ENCODE measurements at regions of chr1 and their contacts with region 1.

Region 1: GRCh38 chr1:234326497-234327366 is 46.5 kb upstream of the COA6 start:
- DNase-seq: peak; percentile 91
- H3K4me3 Mint-ChIP-seq: peak overlapping the region; percentile 84
- H3K27ac Mint-ChIP-seq: peak overlapping the region; percentile 74
- H3K4me1 Mint-ChIP-seq: peaks cover 22% of the 10 kb centered on the region
- H3K27me3 Mint-ChIP-seq: peaks cover 22% of the 10 kb centered on the region

Region 2: DNA sequence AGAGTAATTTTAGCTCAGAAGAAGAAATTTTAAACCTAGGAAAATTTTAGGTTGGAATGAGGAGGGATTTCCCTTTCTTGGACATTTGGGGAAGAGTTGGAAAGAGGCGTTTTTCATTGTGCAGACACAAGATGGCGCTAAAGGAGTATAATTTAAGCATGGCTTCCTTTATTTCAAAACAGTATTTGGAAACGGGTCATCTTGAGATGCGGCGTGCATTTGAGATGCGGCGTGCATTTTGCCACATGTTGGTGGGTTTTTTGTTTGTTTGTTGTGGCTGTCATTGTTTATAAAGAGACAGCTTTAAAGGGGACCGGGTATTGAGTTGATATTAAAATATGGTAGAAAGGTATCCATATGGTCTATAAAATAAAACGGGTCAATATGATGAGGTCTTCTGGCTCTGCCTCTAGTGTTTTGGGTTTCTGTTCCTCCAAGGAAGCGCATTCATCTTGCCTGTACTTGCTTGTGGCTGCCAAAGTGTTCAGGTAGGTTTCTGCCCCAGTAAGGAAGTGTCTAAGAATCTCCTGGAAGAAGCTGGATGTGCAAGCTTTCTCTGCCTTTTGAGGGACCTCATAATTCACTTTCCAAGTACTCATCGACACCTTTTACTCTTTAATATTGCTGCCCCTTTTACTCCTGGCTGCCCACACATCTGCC is 212.0 kb before region 1 on chr1:
- intact Hi-C with region 1: loop called (anchors 1 kb)
- DNase-seq: peak; percentile 76
- H3K4me3 Mint-ChIP-seq: peak overlapping the region; percentile 57
- H3K27ac Mint-ChIP-seq: no peak overlapping the region
- H3K4me1 Mint-ChIP-seq: peaks cover 7% of the 10 kb centered on the region
- H3K27me3 Mint-ChIP-seq: peaks cover 32% of the 10 kb centered on the region

Region 3: GRCh38 chr1:234154320-234155251 is 172.1 kb before region 1 on chr1:
- intact Hi-C with region 1: loop called (anchors 5 kb)
- DNase-seq: peak; percentile 77
- H3K4me3 Mint-ChIP-seq: no peak overlapping the region
- H3K27ac Mint-ChIP-seq: no peak overlapping the region
- H3K4me1 Mint-ChIP-seq: no peaks in the 10 kb centered on the region
- H3K27me3 Mint-ChIP-seq: peaks cover 21% of the 10 kb centered on the region

Region 4: GRCh38 chr1:234281826-234282489 is 44.8 kb before region 1 on chr1:
- intact Hi-C with region 1: no loop called
- DNase-seq: no peak
- H3K4me3 Mint-ChIP-seq: no peak overlapping the region
- H3K27ac Mint-ChIP-seq: no peak overlapping the region
- H3K4me1 Mint-ChIP-seq: no peaks in the 10 kb centered on the region
- H3K27me3 Mint-ChIP-seq: peaks cover 4% of the 10 kb centered on the region

Region 5: DNA sequence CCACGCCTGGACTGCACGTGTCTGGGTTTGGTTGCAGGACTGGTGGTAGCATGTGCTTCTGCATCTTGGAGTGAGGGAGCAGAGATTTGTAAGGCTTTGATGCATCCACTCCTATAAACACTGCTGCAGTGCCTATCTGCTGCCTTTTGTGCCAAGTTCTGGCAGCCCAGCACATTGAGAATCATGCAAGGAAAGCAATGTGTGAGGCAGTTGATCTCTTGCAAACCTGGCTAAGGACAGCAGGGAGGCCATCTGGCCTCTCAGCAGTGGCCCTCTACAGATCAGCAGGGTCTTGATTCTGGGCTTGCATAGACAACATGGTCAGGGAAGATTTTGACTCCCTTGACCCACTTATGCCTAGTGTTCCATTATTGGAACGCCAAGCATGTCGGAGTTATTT is 34.7 kb before region 1 on chr1:
- intact Hi-C with region 1: no loop called
- DNase-seq: no peak
- H3K4me3 Mint-ChIP-seq: no peak overlapping the region
- H3K27ac Mint-ChIP-seq: no peak overlapping the region
- H3K4me1 Mint-ChIP-seq: no peaks in the 10 kb centered on the region
- H3K27me3 Mint-ChIP-seq: peaks cover 6% of the 10 kb centered on the region

Region 6: DNA sequence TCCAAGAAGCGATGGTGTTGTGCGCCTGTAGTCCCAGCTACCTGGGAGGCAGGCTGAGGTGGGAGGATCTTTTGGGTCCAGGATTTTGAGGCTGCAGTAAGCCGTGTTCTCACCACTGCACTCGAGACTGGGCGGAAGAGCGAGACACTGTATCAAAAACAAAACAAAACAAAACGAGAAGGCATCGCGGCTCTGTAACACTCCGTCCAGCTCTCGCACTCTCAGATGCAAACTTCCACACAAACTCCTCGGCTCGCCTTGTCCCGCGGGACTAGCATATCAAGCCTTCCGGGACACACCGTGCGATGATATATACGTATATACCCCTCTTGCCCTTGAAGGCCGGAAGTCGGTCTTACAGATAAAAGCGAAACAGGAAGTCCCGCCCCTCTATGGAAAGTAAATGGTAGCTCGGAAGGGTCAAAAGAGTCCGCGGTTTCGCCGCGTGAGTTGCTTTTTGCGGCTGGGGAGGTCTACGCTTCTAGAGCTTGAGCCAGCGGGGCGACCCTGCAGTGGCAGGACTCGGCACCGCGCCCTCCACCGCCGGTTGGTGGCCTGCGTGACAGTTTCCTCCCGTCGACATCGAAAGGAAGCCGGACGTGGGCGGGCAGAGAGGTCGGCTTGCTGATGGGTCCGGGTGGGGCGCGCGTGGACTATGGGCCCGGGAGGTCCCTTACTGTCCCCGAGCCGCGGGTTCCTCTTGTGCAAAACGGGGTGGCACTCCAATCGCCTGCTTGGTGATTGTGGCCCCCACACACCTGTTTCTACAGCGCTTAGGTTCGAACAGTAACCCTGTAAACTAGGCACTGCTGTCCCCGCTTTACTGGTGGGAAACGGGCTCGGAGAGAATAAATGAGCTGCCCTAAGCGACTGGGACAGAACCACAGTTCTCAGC is 46.6 kb after region 1 on chr1 and contains the start of gene COA6:
- intact Hi-C with region 1: loop called (anchors 2 kb)
- DNase-seq: peak; percentile 96
- H3K4me3 Mint-ChIP-seq: peak within 1 kb of the TSS; percentile 95
- H3K27ac Mint-ChIP-seq: peak within 1 kb of the TSS; percentile 100
- H3K4me1 Mint-ChIP-seq: peaks cover 47% of the 10 kb centered on the region
- H3K27me3 Mint-ChIP-seq: peaks cover 2% of the 10 kb centered on the region
- total RNA-seq, gene COA6: 67.7 and 68.3 TPM in 2 replicates

Region 7: GRCh38 chr1:234409328-234409727 is 82.6 kb after region 1 on chr1:
- intact Hi-C with region 1: loop called (anchors 1 kb)
- DNase-seq: peak; percentile 81
- H3K4me3 Mint-ChIP-seq: peak overlapping the region; percentile 67
- H3K27ac Mint-ChIP-seq: peak overlapping the region; percentile 84
- H3K4me1 Mint-ChIP-seq: peaks cover 30% of the 10 kb centered on the region
- H3K27me3 Mint-ChIP-seq: no peaks in the 10 kb centered on the region

Region 8: DNA sequence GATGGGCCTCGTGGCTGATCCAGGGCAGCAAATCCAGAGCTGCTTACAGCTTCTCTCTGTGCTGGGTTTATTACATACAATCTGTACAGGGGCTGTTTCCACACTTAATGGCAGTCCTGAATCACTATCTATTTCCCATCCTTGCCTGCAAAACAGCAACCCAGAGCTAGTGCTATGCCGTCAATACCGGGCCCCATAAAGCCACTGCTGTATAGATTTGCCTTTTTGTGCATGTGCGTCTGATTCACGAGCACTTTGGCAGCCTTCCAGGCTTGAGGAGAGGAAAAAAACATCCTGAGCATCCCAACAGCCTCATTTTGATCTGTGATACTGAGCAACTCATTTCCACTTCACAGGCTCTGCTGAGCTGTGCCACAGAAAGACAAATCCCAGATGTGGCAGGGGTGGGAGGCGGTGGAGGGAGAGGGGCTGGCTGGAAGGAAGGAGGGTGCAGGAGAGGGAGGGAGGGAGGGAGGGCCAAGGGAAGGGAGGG is 217.4 kb after region 1 on chr1:
- intact Hi-C with region 1: no loop called
- DNase-seq: peak; percentile 68
- H3K4me3 Mint-ChIP-seq: peak overlapping the region; percentile 65
- H3K27ac Mint-ChIP-seq: peak overlapping the region; percentile 77
- H3K4me1 Mint-ChIP-seq: peaks cover 41% of the 10 kb centered on the region
- H3K27me3 Mint-ChIP-seq: no peaks in the 10 kb centered on the region